ENCODE measurements at regions of chr17 and their contacts with region 1.

Region 1: GRCh38 chr17:59762513-59763374 is 55.3 kb downstream of the VMP1 start:
- DNase-seq: no peak
- ATAC-seq: peak; percentile 73
- H3K4me3 Mint-ChIP-seq: no peak overlapping the region
- H3K27ac Mint-ChIP-seq: peak overlapping the region; percentile 62
- H3K4me1 Mint-ChIP-seq: peaks cover 42% of the 10 kb centered on the region
- H3K27me3 Mint-ChIP-seq: no peaks in the 10 kb centered on the region

Region 2: GRCh38 chr17:59778996-59779395 is 16.3 kb after region 1 on chr17:
- CTCF ChIA-PET with region 1: interaction called, 10 read pairs
- POLR2A ChIA-PET with region 1: interaction called, 11 read pairs
- DNase-seq: no peak
- ATAC-seq: no peak
- H3K4me3 Mint-ChIP-seq: no peak overlapping the region
- H3K27ac Mint-ChIP-seq: no peak overlapping the region
- H3K4me1 Mint-ChIP-seq: peaks cover 41% of the 10 kb centered on the region
- H3K27me3 Mint-ChIP-seq: no peaks in the 10 kb centered on the region

Measured in activated CD8-positive, alpha-beta T cell treated with anti-CD3 and anti-CD28 coated beads, Interleukin-2, amount 10 ng/mL, durations not matched to agents 7 days and 5 days (primary cell).